Esophagus muscularis mucosa (tissue), 4 donors: ENCODE measurements at regions of chrX and their contacts with region 1.

Region 1: GRCh38 chrX:15564981-15565579 is 35.7 kb downstream of the ACE2 start:
- DNase-seq: no peak
- H3K4me3 ChIP-seq: no peak overlapping the region
- H3K27ac ChIP-seq: no peak overlapping the region
- H3K4me1 ChIP-seq: no peaks in the 10 kb centered on the region
- H3K27me3 ChIP-seq: no peaks in the 10 kb centered on the region
- CTCF ChIP-seq: peak; percentile 24 to 53 (median 39)
- EP300 ChIP-seq: no peak
- POLR2A ChIP-seq: no peak

Region 2: GRCh38 chrX:15356444-15356843 is 208.6 kb before region 1 on chrX:
- intact Hi-C with region 1: loop called (anchors 10 kb)
- DNase-seq: no peak
- H3K4me3 ChIP-seq: no peak overlapping the region
- H3K27ac ChIP-seq: peak overlapping the region in 1 of 4 donors; percentile 38
- H3K4me1 ChIP-seq: no peaks in the 10 kb centered on the region
- H3K27me3 ChIP-seq: no peaks in the 10 kb centered on the region
- CTCF ChIP-seq: no peak
- EP300 ChIP-seq: no peak
- POLR2A ChIP-seq: no peak

Region 3: DNA sequence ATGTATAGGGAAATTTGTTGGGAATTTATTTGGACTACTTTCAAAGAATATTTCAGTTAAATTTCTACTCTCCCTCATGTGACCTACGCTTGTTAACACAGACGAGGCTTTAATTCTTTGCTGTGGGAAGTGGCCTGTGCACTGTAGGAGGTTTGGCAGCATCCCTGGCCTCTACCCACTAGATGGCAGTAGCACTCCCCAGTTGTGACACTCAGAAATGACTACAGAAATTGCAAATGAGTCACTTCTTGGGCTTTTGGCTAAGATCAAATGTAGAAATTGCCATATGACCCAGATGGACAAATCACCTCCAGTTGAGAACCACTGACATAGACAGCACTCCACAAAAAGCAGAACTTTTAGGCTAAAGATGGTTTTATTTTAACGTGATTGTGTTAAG is 94.1 kb before region 1 on chrX:
- intact Hi-C with region 1: loop called (anchors 5 kb)
- DNase-seq: no peak
- H3K4me3 ChIP-seq: no peak overlapping the region
- H3K27ac ChIP-seq: no peak overlapping the region
- H3K4me1 ChIP-seq: peaks cover 0 to 5% (median 0%) of the 10 kb centered on the region in 4 donors
- H3K27me3 ChIP-seq: no peaks in the 10 kb centered on the region
- CTCF ChIP-seq: peak; percentile 67 to 71 (median 69)
- EP300 ChIP-seq: no peak
- POLR2A ChIP-seq: no peak

Region 4: DNA sequence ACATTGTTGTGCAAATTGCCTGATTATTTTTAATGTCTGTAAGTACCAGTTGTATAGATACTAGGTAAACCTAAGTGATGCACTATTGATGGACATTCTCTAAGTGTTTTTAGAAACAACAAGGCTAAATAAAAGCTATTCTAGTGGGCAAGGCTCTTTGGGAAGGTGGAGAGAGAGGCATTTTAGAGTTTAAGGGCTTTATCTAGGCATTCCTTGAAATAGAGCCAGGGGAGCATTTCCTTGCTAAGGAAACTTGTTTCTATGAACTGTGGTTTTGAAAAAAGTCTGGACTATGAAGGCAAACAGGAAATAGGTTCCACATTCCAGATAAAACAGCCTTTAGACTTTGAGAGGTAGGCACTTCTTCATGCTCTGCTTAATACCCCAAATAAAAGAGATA is 40.7 kb before region 1 on chrX:
- intact Hi-C with region 1: no loop called
- DNase-seq: no peak
- H3K4me3 ChIP-seq: no peak overlapping the region
- H3K27ac ChIP-seq: no peak overlapping the region
- H3K4me1 ChIP-seq: no peaks in the 10 kb centered on the region
- H3K27me3 ChIP-seq: peaks cover 0 to 3% (median 0%) of the 10 kb centered on the region in 4 donors
- CTCF ChIP-seq: no peak
- EP300 ChIP-seq: no peak
- POLR2A ChIP-seq: no peak